Common myeloid progenitor, CD34-positive (primary cell): ENCODE measurements at regions of chr17 and their contacts with region 1.

Region 1: DNA sequence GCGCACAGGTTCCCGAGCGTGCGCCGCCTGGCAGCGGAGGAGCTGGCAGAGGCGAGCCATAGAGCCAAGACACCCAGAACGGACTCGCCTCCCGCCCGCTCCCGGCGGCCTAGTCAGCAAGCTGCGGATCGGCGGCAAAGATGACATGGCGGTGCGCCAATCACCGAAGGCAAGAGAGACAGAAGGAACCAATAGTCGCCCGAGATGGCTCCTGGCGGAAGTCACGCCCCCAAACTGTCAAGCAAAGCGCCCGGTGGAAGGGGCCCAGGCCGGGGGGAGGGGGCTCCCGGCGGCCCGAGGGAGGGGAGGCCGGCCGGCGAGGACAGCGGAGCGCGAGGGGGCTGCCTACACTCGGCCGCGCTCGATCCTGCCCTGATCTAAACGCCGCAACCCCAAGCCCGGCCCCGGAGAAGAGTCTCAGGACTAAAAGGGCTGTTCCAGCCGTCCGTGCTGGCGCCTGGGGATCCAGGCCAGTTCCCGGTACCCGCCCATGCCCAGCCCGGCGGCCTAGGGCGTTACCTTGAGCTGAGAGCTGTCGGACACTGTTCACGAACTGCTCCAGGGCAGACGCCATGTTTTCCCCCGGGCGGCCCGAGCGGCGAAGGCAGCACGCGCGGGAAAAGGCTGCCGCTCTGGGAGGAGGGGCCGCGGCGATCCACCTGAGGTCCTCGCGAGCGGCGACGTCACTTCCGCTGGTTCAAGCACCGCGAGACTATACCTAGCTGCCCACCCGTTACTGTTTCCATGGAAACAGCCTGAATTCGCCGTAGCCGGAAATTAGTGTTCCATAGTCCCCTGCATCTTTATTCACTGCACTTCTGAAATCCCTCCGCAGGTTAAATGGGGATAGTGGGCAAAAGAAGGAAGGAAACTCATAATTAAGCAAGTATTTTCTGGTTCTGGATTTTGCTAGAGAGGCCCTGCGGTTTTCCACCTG is at the start of gene COPS3:
- DNase-seq: peak; percentile 99
- H3K4me3 ChIP-seq: peak within 1 kb of the TSS; percentile 53 to 94 (median 89)
- H3K27ac ChIP-seq: peak within 1 kb of the TSS; percentile 89 to 96
- H3K4me1 ChIP-seq: peaks cover 16 to 52% (median 35%) of the 10 kb centered on the region in 4 experiments
- H3K27me3 ChIP-seq: no peaks in the 10 kb centered on the region

Region 2: GRCh38 chr17:17305281-17305801 is 24.5 kb after region 1 on chr17:
- CTCF ChIA-PET with region 1: interaction called, 6 read pairs
- POLR2A ChIA-PET with region 1: interaction called, 17 read pairs
- DNase-seq: peak; percentile 76 to 96 (median 89)
- H3K4me3 ChIP-seq: peak overlapping the region in 5 of 7 experiments; percentile 73 to 91 (median 77)
- H3K27ac ChIP-seq: peak overlapping the region in 1 of 2 experiments; percentile 91
- H3K4me1 ChIP-seq: peaks cover 15 to 51% (median 47%) of the 10 kb centered on the region in 4 experiments
- H3K27me3 ChIP-seq: no peaks in the 10 kb centered on the region